ENCODE measurements at regions of chr19 and their contacts with region 1.

Region 1: GRCh38 chr19:12672744-12673143 is 6.1 kb downstream of the WDR83 start:
- DNase-seq: no peak
- H3K4me3 Mint-ChIP-seq: no peak overlapping the region
- H3K27ac Mint-ChIP-seq: no peak overlapping the region
- H3K4me1 Mint-ChIP-seq: peaks cover 34% of the 10 kb centered on the region
- H3K27me3 Mint-ChIP-seq: no peaks in the 10 kb centered on the region

Region 2: DNA sequence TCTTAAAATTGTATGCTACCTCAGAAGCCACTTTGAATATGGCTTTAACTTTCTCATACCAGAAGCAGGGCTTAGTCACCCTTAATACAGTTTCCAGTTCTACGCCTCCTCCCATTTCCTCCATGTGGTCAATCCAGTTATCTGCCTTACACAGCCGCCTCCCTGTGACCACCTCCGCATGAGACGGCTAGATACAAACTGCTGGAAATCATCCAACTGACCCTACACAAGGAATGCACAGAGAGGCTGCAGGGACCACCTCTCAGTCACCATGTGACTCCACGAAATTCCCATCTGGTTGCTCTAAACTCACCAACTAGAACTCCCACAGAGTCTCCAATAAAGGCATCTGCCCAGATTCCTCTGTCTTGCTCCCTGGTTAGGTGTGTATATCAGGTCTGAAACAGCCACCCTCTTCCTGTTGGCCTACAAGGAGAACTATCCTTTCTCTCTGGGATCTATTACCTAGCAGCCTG is 128.3 kb before region 1 on chr19:
- intact Hi-C with region 1: no loop called
- DNase-seq: no peak
- H3K4me3 Mint-ChIP-seq: no peak overlapping the region
- H3K27ac Mint-ChIP-seq: no peak overlapping the region
- H3K4me1 Mint-ChIP-seq: peaks cover 15% of the 10 kb centered on the region
- H3K27me3 Mint-ChIP-seq: no peaks in the 10 kb centered on the region

Region 3: DNA sequence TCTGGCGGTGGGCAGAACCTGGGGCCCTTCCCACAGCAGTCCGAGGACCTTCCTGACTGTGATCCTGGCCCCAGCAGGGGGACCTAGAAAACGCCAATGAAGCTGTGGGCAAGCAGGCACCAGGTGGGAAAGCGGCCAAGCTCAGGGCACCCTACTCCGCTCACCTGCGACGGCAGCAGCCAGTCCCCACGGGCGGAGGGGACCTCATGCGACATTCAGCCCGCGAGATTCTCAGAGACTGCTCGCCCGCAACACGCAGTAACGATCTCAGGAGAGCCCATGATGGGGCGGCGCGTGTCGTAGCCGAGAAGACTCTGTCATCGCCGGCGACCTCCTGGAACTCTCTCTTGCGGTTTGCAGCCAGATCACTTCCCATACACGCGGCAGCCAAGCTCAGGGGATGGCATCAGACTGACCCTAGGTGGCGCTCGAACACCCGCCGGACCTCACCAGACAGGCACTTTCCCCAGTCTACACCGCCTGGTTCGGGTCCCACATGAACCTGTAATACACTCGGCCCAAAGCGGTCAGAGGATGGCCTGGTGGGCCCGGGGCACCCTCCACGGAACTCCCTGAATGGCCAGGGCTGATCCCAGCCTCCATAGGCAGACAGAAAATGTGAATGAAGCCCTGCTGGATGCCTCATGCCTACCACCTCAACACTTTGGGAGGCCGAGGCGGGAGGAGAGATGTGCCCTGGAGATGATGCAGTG is 32.7 kb before region 1 on chr19:
- intact Hi-C with region 1: loop called (anchors 1 kb)
- DNase-seq: peak; percentile 72
- H3K4me3 Mint-ChIP-seq: peak overlapping the region; percentile 53
- H3K27ac Mint-ChIP-seq: peak overlapping the region; percentile 63
- H3K4me1 Mint-ChIP-seq: peaks cover 13% of the 10 kb centered on the region
- H3K27me3 Mint-ChIP-seq: no peaks in the 10 kb centered on the region

Region 4: DNA sequence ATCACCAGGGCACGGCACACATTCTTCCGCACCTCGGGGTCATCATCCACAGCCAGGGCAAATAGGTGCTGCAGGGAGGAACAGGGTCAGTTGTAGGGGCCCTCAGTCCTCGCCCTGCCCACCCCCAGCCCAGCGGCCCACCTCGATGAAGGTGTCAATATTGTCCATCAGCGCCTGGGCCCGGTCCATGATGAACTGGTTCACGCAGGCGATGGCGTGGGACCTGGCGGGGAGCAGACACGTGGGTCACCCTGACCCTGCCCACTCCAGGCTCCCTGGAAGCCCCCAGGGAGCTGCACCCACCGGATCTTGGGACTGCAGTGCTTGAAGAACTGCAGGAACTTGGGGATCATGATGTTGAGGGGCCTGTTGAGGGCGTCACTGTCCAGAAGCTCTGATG is 42.4 kb after region 1 on chr19:
- intact Hi-C with region 1: no loop called
- DNase-seq: no peak
- H3K4me3 Mint-ChIP-seq: no peak overlapping the region
- H3K27ac Mint-ChIP-seq: no peak overlapping the region
- H3K4me1 Mint-ChIP-seq: peaks cover 13% of the 10 kb centered on the region
- H3K27me3 Mint-ChIP-seq: no peaks in the 10 kb centered on the region